GM13977 (cell line): ENCODE measurements at regions of chr1 and their contacts with region 1.

Region 1: GRCh38 chr1:161374373-161374772 is 6.7 kb upstream of the CFAP126 start:
- DNase-seq: no peak
- CTCF ChIP-seq: peak; percentile 27

Region 2: DNA sequence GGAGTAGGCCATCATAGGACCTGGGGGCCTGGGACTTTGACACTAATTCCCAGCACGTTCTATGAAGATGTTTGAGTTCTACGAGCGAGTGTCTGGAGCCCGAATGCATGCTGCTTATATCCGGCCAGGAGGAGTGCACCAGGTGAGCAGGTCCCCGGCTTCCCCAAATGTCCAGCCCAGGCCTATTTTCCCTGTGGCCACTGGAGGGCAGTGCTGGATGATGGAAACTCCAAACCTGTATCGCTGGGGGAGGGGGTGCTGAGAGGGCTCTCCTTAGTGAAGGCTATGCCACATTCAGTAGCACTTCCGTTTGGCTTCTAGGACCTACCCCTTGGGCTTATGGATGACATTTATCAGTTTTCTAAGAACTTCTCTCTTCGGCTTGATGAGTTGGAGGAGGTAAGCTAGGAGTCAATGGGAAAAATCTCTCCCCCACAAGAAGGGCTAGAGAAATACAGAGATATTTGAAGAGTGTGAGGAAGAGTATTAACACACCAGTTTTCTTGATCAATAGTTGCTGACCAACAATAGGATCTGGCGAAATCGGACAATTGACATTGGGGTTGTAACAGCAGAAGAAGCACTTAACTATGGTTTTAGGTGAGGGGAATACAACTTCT is 164.5 kb before region 1 on chr1:
- in situ Hi-C with region 1: loop called (anchors 10 kb)
- DNase-seq: peak; percentile 66
- CTCF ChIP-seq: peak; percentile 90

Region 3: GRCh38 chr1:161266202-161266601 is 108.2 kb before region 1 on chr1:
- in situ Hi-C with region 1: no loop called
- DNase-seq: no peak
- CTCF ChIP-seq: no peak

Region 4: GRCh38 chr1:161986328-161986727 is 612.0 kb after region 1 on chr1:
- in situ Hi-C with region 1: no loop called
- DNase-seq: no peak
- CTCF ChIP-seq: no peak